Spleen (tissue), 13 donors: ENCODE measurements at regions of chr3 and their contacts with region 1.

Region 1: GRCh38 chr3:120596116-120596852 is at the start of gene NDUFB4:
- DNase-seq: peak; percentile 99
- H3K4me3 ChIP-seq: peak within 1 kb of the TSS; percentile 52 to 95 (median 70)
- H3K27ac ChIP-seq: peak within 1 kb of the TSS; percentile 81 to 96 (median 93)
- H3K4me1 ChIP-seq: peaks cover 23 to 56% (median 46%) of the 10 kb centered on the region in 6 donors
- H3K27me3 ChIP-seq: no peaks in the 10 kb centered on the region
- CTCF ChIP-seq: peak in 1 of 11 experiments; percentile 37
- POLR2A ChIP-seq: peak in 1 of 3 donors; percentile 26
- total RNA-seq, gene NDUFB4: 65.9 to 97.8 (median 75.2) TPM

Region 2: DNA sequence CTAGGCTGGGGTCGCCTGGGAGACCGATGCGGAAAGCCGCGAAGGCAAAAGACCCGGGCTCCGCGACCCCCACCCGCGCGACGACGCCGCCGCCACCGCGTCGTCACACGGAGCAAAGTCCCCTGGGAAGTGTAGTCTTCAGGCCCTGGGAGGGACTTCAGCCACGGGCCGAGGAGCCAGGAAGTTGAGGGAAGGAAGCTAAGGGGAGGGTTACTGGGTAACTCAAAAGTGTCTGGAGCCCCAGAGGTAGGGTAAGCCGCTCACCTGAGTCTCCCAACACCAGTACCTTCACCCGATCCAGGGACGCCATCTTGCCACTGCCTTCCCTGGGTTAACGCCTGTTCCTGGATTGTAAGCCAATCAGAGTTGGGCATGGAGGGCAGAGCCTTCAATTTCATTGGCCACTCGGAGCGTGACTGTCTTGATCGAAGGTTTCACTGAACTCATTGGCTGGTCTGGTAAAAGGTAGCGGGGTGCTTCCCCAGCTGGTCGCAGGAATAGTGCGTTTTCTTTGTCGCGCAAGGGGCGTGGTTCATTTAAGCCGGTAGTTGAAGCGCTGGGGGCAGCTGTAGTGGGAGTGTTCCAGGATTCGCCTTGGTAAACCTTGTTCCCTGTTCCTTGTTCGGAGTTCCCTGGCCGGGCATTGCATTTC is 146.0 kb after region 1 on chr3 and contains the starts of genes GTF2E1 and RABL3:
- intact Hi-C with region 1: loop called (anchors 10 kb)
- DNase-seq: peak; percentile 97
- H3K4me3 ChIP-seq: peak within 1 kb of the TSS; percentile 64 to 96 (median 86)
- H3K27ac ChIP-seq: peak within 1 kb of the TSS; percentile 92 to 98 (median 97)
- H3K4me1 ChIP-seq: peaks cover 12 to 49% (median 32%) of the 10 kb centered on the region in 6 donors
- H3K27me3 ChIP-seq: no peaks in the 10 kb centered on the region
- CTCF ChIP-seq: no peak
- POLR2A ChIP-seq: peak in 2 of 3 donors; percentile 44 to 73
- total RNA-seq, gene GTF2E1: 18.7 to 28.3 (median 21.3) TPM
- total RNA-seq, gene RABL3: 12.0 to 24.0 (median 19.1) TPM